ENCODE measurements at regions of chr3 and their contacts with region 1.

Region 1: GRCh38 chr3:153026026-153026425 is 136.0 kb upstream of the RAP2B start:
- DNase-seq: no peak
- ATAC-seq: no peak
- H3K4me3 Mint-ChIP-seq: no peak overlapping the region
- H3K27ac Mint-ChIP-seq: no peak overlapping the region
- H3K4me1 Mint-ChIP-seq: no peaks in the 10 kb centered on the region
- H3K27me3 Mint-ChIP-seq: no peaks in the 10 kb centered on the region
- CTCF ChIP-seq: no peak

Region 2: GRCh38 chr3:153087595-153088566 is 61.9 kb after region 1 on chr3:
- CTCF ChIA-PET with region 1: no interaction called
- POLR2A ChIA-PET with region 1: no interaction called
- intact Hi-C with region 1: no loop called
- DNase-seq: no peak
- ATAC-seq: no peak
- H3K4me3 Mint-ChIP-seq: no peak overlapping the region
- H3K27ac Mint-ChIP-seq: no peak overlapping the region
- H3K4me1 Mint-ChIP-seq: no peaks in the 10 kb centered on the region
- H3K27me3 Mint-ChIP-seq: peaks cover 10% of the 10 kb centered on the region
- CTCF ChIP-seq: no peak

Region 3: DNA sequence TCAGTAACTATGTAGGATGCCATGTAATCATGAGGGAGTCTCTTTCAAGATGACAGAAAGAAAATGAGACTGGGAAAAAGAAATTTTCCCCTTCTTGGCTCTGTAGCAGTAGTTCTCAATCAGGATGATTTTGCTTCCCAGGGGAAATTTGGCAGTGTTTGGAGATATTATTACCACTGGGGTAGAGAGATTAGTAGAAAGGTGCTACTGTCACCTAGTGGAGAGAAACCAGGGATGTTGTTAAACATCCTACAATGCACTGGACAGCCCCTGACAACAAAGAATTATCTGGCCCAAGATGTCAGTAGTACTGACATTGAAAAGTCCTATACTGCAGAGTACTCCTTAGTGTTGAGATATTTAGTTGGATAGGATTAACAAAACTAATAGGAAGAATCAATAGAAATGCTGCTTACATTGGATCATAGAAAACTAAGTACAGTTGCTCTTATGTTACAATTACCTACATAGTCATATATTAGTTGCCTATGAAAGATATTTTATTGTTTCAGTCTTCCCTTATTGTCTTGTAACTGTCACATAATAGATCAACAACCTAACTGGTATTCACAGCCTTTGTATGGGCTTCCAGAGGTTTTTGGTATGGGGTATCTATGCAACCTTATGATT is 569.3 kb after region 1 on chr3:
- CTCF ChIA-PET with region 1: no interaction called
- POLR2A ChIA-PET with region 1: no interaction called
- intact Hi-C with region 1: loop called (anchors 1 kb)
- DNase-seq: no peak
- ATAC-seq: no peak
- H3K4me3 Mint-ChIP-seq: no peak overlapping the region
- H3K27ac Mint-ChIP-seq: no peak overlapping the region
- H3K4me1 Mint-ChIP-seq: no peaks in the 10 kb centered on the region
- H3K27me3 Mint-ChIP-seq: no peaks in the 10 kb centered on the region
- CTCF ChIP-seq: no peak

Region 4: GRCh38 chr3:153768561-153769469 is 742.8 kb after region 1 on chr3:
- CTCF ChIA-PET with region 1: interaction called, 8 read pairs
- POLR2A ChIA-PET with region 1: no interaction called
- intact Hi-C with region 1: loop called (anchors 1 kb)
- DNase-seq: no peak
- ATAC-seq: peak; percentile 77
- H3K4me3 Mint-ChIP-seq: no peak overlapping the region
- H3K27ac Mint-ChIP-seq: no peak overlapping the region
- H3K4me1 Mint-ChIP-seq: no peaks in the 10 kb centered on the region
- H3K27me3 Mint-ChIP-seq: peaks cover 3% of the 10 kb centered on the region
- CTCF ChIP-seq: peak; percentile 15

Region 5: DNA sequence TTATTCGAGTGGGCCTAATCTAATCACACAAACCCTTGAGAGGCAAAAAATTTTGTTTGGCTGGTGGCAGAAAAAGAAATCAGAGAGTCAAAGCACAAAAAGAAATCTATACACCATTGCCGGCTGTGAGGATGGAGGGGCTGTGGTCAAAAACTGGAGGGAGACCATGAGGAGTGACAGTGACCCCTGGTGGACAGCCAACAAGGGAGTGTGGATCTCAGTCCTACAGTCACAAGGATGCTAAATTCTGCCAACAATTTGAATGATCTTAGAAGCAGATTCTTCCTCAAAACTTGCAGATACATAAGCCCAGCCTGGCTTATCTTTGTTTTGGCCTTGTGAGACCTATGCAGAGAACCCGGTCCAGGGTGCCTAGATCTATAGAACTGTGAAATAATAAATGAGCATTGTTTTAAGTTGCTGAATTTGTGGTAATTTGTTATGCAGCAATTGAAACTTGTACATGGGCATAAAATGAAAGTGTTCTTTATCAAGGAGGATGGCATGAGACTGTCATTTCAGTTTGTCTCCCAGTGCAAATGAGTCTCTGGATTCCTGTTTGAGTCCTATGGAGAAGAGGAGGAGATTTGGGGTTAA is 992.2 kb after region 1 on chr3:
- CTCF ChIA-PET with region 1: no interaction called
- POLR2A ChIA-PET with region 1: no interaction called
- intact Hi-C with region 1: loop called (anchors 1 kb)
- DNase-seq: no peak
- ATAC-seq: peak; percentile 42
- H3K4me3 Mint-ChIP-seq: no peak overlapping the region
- H3K27ac Mint-ChIP-seq: no peak overlapping the region
- H3K4me1 Mint-ChIP-seq: no peaks in the 10 kb centered on the region
- H3K27me3 Mint-ChIP-seq: no peaks in the 10 kb centered on the region
- CTCF ChIP-seq: no peak

Region 6: DNA sequence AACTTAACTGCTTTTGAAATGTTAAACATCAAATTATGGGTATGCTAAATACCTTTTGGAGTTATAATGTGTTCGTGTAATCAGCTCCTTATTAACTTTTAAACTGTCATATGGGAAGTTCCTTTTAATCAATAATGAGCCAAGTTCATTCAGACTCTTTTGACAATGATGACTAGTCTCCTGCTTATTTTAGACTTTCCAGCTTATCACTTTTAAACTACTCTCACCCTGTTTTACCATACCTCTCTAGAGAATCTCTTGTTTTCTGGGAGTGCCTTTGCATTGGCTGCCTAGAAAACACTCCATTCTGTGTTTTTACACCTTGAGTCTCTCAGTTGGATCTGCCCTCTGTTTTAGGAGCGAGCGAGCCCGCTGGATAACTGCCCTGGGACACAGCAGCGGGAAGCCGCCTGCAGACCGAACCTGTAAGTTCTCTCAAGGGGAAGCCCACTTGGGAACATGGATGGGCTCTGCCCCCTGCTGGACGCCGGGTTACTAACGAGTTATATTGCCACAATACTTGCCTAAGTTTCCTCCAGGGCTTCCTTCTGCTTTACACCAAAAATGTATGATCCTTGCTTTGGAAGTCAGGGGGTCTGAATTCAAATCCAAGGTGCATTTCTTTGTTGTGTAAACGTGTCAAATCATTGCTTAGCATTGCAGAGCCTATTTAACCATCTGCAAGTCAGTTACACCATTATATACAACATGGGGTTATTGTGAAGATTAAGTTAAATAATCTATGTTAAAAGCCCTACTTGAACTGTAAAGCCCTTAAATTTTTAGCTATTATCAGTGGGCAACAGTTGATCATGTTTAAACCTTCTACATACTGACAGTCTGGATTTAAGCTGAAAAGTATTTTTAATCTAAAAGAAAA is 1227.0 kb after region 1 on chr3:
- CTCF ChIA-PET with region 1: interaction called, 3 read pairs
- POLR2A ChIA-PET with region 1: no interaction called
- intact Hi-C with region 1: loop called (anchors 1 kb)
- DNase-seq: peak; percentile 47
- ATAC-seq: peak; percentile 79
- H3K4me3 Mint-ChIP-seq: no peak overlapping the region
- H3K27ac Mint-ChIP-seq: no peak overlapping the region
- H3K4me1 Mint-ChIP-seq: peaks cover 3% of the 10 kb centered on the region
- H3K27me3 Mint-ChIP-seq: no peaks in the 10 kb centered on the region
- CTCF ChIP-seq: peak; percentile 64

Measured in activated B cell treated with CpG ODN at 0.5 μM for 24 hours (primary cell).